ENCODE measurements at regions of chr21 and their contacts with region 1.

Region 1: GRCh38 chr21:17819114-17819876 is at the start of gene C21orf91:
- DNase-seq: peak; percentile 79
- ATAC-seq: peak; percentile 89
- H3K4me3 ChIP-seq: peak within 1 kb of the TSS; percentile 92
- H3K27ac ChIP-seq: peak within 1 kb of the TSS; percentile 98
- H3K4me1 ChIP-seq: peaks cover 12% of the 10 kb centered on the region
- H3K27me3 ChIP-seq: no peaks in the 10 kb centered on the region
- CTCF ChIP-seq: no peak
- EP300 ChIP-seq: peak in 1 of 2 experiments; percentile 67; a peak in 2 of 4 replicates
- POLR2A ChIP-seq: peak; percentile 96
- RAD21 ChIP-seq: no peak
- polyA plus RNA-seq, gene C21orf91: 9.3 to 14.4 TPM

Region 2: GRCh38 chr21:17679002-17679600 is 140.2 kb before region 1 on chr21:
- CTCF ChIA-PET with region 1: interaction called, 4 read pairs
- POLR2A ChIA-PET with region 1: no interaction called
- RAD21 ChIA-PET with region 1: interaction called, 3 read pairs
- SMC1A ChIA-PET with region 1: interaction called, 12 read pairs
- in situ Hi-C with region 1: no loop called
- intact Hi-C with region 1: loop called (anchors 2 kb)
- DNase-seq: peak; percentile 48
- ATAC-seq: peak; percentile 95
- H3K4me3 ChIP-seq: no peak overlapping the region
- H3K27ac ChIP-seq: no peak overlapping the region
- H3K4me1 ChIP-seq: no peaks in the 10 kb centered on the region
- H3K27me3 ChIP-seq: no peaks in the 10 kb centered on the region
- CTCF ChIP-seq: peak; percentile 70 to 89 (median 76); a peak in 5 of 6 replicates
- EP300 ChIP-seq: no peak
- POLR2A ChIP-seq: no peak
- RAD21 ChIP-seq: peak; percentile 97

Region 3: DNA sequence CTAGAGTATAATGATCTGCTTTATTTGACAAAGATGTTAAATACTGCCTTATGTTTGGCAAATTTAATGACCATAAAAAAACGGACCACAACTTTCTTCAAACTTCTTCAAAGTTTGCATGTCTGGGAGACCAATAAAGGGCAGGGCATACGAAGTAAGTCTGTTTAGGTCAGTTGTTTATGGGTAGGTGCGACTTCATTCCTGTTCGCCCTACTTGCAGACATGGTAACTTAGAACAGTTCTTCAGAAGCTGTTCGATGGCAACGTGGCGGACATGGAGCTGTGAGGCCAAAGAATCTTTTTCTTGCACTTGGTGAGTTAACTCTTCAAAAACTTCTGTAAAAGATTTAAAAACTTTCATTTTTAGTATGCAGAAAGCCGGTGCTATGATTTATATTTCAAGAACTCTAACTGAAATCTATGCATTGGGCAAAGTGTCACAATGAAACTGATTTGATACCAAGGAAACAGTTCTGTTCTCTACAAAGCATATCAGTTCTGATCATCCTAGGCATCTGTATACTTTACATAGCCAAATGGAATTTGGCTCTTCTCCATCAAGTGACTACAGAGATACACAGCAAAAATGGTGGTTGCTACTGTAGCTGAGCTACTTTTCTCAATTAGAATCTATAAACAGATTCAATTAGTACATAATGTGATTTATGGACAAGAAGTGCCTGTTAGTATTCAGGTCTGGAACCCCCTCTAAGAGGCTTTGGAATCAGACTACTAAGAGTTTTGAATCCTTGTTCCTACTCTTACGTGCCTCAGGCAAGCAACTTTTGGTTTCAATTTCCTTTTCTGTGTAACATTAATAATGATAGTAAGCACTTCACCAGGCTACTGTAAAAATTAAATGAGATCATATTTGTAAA is 25.8 kb before region 1 on chr21:
- CTCF ChIA-PET with region 1: interaction called, 15 read pairs
- POLR2A ChIA-PET with region 1: interaction called, 30 read pairs
- RAD21 ChIA-PET with region 1: interaction called, 18 read pairs
- SMC1A ChIA-PET with region 1: interaction called, 37 read pairs
- in situ Hi-C with region 1: no loop called
- intact Hi-C with region 1: no loop called
- DNase-seq: no peak
- ATAC-seq: peak; percentile 68
- H3K4me3 ChIP-seq: peak overlapping the region; percentile 4; the same call in 1 of the 2 replicates
- H3K27ac ChIP-seq: peak overlapping the region; percentile 45
- H3K4me1 ChIP-seq: peaks cover 33% of the 10 kb centered on the region
- H3K27me3 ChIP-seq: no peaks in the 10 kb centered on the region
- CTCF ChIP-seq: no peak
- EP300 ChIP-seq: no peak
- POLR2A ChIP-seq: no peak
- RAD21 ChIP-seq: no peak

Region 4: GRCh38 chr21:17834639-17835354 is 15.5 kb after region 1 on chr21:
- CTCF ChIA-PET with region 1: interaction called, 4 read pairs
- POLR2A ChIA-PET with region 1: interaction called, 3 read pairs
- RAD21 ChIA-PET with region 1: interaction called, 7 read pairs
- SMC1A ChIA-PET with region 1: interaction called, 11 read pairs
- in situ Hi-C with region 1: no loop called
- intact Hi-C with region 1: no loop called
- DNase-seq: no peak
- ATAC-seq: peak; percentile 71
- H3K4me3 ChIP-seq: no peak overlapping the region
- H3K27ac ChIP-seq: no peak overlapping the region
- H3K4me1 ChIP-seq: peaks cover 6% of the 10 kb centered on the region; the same call in 1 of the 2 replicates
- H3K27me3 ChIP-seq: no peaks in the 10 kb centered on the region
- CTCF ChIP-seq: no peak
- EP300 ChIP-seq: no peak
- POLR2A ChIP-seq: no peak
- RAD21 ChIP-seq: no peak

Region 5: GRCh38 chr21:17903029-17903806 is 83.9 kb after region 1 on chr21:
- CTCF ChIA-PET with region 1: interaction called, 7 read pairs
- POLR2A ChIA-PET with region 1: no interaction called
- RAD21 ChIA-PET with region 1: interaction called, 3 read pairs
- SMC1A ChIA-PET with region 1: interaction called, 3 read pairs
- in situ Hi-C with region 1: no loop called
- intact Hi-C with region 1: loop called (anchors 2 kb)
- DNase-seq: no peak
- ATAC-seq: peak; percentile 68
- H3K4me3 ChIP-seq: no peak overlapping the region
- H3K27ac ChIP-seq: no peak overlapping the region
- H3K4me1 ChIP-seq: peaks cover 3% of the 10 kb centered on the region
- H3K27me3 ChIP-seq: no peaks in the 10 kb centered on the region
- CTCF ChIP-seq: peak in 1 of 3 experiments; percentile 40; a peak in 1 of 6 replicates
- EP300 ChIP-seq: no peak
- POLR2A ChIP-seq: no peak
- RAD21 ChIP-seq: peak; percentile 49; the same call in 1 of the 2 replicates